Dorsolateral prefrontal cortex (tissue), 120 donors: ENCODE measurements at regions of chr1 and their contacts with region 1.

Region 1: DNA sequence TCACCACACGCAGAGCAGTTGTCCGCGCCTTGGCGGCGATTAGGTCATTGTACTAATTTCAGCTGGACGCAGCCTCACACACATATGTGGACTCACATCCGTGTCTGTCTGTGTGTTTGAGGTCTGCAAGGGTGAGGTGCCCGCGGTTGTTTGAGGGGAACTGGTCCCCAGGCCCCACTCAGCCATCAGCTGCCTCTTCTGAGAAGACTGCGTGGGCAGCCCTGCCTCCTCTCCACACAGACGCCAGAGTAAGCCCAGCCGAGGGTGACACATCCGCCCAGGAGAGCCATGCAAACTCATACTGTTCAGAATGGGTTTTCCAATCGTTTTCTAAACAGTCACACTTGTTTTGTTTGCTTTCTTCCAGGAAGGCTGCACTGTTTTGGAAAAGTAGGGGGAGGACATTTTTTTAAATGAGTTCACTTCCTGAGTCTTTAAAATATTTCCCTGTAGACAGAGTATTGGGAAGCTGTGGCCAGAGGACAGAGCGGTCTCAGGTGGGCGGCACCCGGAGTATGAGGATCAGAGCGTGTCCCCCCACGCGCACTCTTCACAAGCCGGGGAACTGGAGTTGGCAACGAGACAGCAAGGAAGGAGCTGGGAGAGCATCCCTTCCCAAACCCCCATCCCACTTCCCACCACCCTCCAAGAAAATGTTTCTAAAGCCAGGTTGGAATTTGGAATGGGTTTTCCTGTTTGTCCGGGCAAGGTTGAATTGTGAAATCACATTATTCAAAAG is 53.3 kb downstream of the TOMM20 start:
- DNase-seq: peak in 8 of 10 donors; percentile 52 to 89 (median 77)
- H3K4me3 ChIP-seq: peak overlapping the region in 43 of 59 donors; percentile 1 to 51 (median 23)
- H3K27ac ChIP-seq: peak overlapping the region; percentile 34 to 95 (median 87)
- H3K27me3 ChIP-seq: no peaks in the 10 kb centered on the region
- CTCF ChIP-seq: no peak

Region 2: DNA sequence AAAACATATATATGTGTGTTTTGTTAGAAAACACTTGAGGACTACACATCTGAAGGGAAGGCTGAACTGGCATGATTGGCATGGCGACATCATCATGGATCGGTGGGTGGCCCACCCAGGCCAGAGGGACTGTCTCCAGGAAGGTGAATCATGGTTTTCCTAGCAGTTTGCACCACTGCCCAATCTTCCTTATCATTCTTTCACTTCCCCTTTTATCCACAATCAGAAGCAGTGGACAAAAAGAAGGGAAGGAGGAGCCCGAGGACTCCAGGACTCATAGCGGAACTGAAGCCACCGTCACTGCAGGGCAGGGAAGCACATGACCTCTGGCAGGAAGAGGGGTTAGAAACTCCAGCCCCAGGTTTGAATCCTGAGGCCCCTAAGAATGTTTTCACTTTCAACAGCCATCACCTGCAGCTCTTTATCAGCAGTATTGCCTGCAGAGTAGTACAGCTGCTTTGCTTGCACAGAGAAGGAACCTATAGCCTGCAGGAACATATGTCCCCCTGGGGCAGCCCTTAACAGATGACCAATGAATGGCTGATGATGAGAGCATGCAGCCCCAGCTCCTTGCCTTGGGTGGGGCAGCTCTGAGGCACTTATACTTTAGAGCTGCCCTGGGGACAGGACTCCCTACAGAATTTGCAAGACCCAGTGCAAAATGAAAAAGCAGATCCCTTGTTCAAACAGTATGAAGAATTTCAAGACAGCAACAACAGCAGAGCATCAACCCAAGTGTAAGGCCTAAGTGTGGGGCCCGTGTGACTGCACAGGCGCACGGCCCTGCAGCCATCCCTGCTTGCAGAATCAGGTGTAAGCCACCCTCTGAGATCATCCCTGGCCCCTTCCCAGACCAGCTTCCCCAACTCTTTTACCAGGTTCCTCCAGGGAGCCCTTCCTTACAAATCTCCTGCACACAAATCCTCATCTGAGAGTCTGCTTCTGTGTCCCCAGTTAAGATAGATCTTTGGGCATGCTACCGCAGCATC is 223.6 kb before region 1 on chr1:
- intact Hi-C with region 1: loop called in 1 of 2 experiments (anchors 10 kb)
- DNase-seq: no peak
- H3K4me3 ChIP-seq: no peak overlapping the region
- H3K27ac ChIP-seq: no peak overlapping the region
- H3K27me3 ChIP-seq: no peaks in the 10 kb centered on the region
- CTCF ChIP-seq: no peak

Region 3: DNA sequence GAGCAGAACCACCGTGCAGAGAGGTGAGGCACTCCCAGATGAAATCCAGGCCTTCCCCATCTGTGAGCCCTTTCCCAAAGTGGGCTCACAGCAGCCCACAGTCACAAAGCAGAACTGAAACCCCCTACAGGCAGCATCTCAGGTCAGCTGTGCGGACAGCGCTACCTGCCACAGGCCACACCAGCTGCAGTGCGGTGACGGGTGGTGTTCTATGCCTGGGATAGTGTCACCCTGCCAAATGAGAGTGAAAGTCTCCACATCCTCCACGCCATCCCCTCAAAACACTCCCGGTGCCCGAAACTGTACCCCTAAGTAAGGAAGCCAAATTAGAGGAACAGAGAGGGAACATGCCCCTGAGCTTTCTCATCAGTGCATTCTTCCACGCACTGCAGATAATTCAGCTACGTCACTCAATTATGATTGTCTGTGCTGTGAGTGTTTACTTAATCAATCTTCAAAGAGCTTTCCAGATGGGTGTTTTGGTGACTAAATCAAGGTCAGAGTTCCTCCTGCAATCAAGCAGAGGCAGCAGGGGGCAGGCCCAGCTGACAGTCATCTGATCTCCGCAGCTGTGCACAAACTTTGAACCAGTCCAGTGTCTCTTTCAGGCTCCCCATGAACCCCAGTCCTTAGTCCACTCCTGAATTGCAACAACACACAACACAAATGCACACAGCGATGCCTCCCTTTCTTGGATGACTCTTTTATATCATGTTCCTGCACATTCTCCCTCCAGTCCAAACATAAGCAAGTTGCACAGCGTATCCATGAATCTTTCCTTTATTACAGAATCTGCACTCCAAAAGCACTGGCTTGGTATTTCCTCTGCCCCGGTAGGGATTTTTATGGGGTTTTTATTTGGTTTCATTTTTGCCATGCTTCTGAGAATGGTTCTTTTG is 96.7 kb before region 1 on chr1:
- intact Hi-C with region 1: loop called in 1 of 2 experiments (anchors 5 kb)
- DNase-seq: peak in 9 of 10 donors; percentile 73 to 88 (median 78)
- H3K4me3 ChIP-seq: peak overlapping the region in 20 of 59 donors; percentile 2 to 42 (median 11)
- H3K27ac ChIP-seq: peak overlapping the region; percentile 80 to 98 (median 94)
- H3K27me3 ChIP-seq: no peaks in the 10 kb centered on the region
- CTCF ChIP-seq: peak in 28 of 56 donors; percentile 5 to 57 (median 26)

Region 4: GRCh38 chr1:234997201-234997895 is 78.0 kb before region 1 on chr1:
- intact Hi-C with region 1: loop called (anchors 5 kb)
- DNase-seq: peak; percentile 90 to 98 (median 96)
- H3K4me3 ChIP-seq: peak overlapping the region in 43 of 59 donors; percentile 0 to 48 (median 24)
- H3K27ac ChIP-seq: peak overlapping the region; percentile 74 to 97 (median 90)
- H3K27me3 ChIP-seq: no peaks in the 10 kb centered on the region
- CTCF ChIP-seq: peak in 10 of 56 donors; percentile 5 to 39 (median 22)

Region 5: DNA sequence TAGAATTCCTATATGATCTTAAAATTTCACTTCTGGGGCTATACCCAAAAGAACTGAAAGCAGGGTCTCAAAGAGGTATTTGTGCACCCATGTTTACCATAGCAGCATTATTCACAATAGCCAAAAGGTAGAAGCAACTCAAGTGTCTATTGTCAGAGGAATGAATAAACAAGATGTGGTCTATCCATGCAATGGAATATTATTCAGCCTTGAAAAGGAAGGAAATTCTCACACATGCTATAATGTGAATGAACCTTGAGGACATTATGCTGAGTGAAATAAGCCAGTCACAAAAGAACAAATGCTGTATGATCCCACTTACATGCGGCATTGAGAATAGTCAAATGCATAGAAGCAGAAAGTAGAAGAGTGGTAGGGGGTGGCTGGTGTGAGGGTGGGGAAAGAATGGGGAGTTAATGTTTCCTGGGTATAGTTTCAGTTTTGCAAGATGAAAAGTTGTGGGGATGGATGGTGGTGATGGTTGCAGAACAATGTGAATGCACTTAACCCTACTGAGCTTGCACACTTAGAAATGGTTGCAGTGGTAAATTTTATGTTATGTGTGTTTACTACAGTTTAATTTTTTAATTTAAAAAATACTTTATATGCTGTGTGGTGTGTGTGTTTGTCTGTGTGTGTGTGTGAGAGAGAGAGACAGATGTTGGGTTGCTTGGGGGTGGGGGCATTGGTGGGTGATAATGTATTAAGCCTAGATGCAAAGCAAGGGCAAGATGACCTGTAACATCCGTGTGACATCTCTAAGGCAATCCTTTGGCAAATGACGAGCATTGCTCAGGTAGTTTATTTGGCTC is 69.0 kb before region 1 on chr1:
- intact Hi-C with region 1: loop called (anchors 5 kb)
- DNase-seq: no peak
- H3K4me3 ChIP-seq: no peak overlapping the region
- H3K27ac ChIP-seq: no peak overlapping the region
- H3K27me3 ChIP-seq: no peaks in the 10 kb centered on the region
- CTCF ChIP-seq: no peak

Region 6: GRCh38 chr1:235102993-235103411 is 27.6 kb after region 1 on chr1:
- intact Hi-C with region 1: no loop called
- DNase-seq: peak in 3 of 10 donors; percentile 16 to 64 (median 52)
- H3K4me3 ChIP-seq: peak overlapping the region in 3 of 59 donors; percentile 48 to 61 (median 59)
- H3K27ac ChIP-seq: peak overlapping the region in 12 of 59 donors; percentile 22 to 68 (median 45)
- H3K27me3 ChIP-seq: no peaks in the 10 kb centered on the region
- CTCF ChIP-seq: no peak

Region 7: GRCh38 chr1:235113183-235113917 is 38.0 kb after region 1 on chr1:
- intact Hi-C with region 1: no loop called
- DNase-seq: no peak
- H3K4me3 ChIP-seq: no peak overlapping the region
- H3K27ac ChIP-seq: peak overlapping the region in 3 of 59 donors; percentile 14 to 27 (median 15)
- H3K27me3 ChIP-seq: no peaks in the 10 kb centered on the region
- CTCF ChIP-seq: no peak